Natural killer cell (primary cell): ENCODE measurements at regions of chr14 and their contacts with region 1.

Region 1: DNA sequence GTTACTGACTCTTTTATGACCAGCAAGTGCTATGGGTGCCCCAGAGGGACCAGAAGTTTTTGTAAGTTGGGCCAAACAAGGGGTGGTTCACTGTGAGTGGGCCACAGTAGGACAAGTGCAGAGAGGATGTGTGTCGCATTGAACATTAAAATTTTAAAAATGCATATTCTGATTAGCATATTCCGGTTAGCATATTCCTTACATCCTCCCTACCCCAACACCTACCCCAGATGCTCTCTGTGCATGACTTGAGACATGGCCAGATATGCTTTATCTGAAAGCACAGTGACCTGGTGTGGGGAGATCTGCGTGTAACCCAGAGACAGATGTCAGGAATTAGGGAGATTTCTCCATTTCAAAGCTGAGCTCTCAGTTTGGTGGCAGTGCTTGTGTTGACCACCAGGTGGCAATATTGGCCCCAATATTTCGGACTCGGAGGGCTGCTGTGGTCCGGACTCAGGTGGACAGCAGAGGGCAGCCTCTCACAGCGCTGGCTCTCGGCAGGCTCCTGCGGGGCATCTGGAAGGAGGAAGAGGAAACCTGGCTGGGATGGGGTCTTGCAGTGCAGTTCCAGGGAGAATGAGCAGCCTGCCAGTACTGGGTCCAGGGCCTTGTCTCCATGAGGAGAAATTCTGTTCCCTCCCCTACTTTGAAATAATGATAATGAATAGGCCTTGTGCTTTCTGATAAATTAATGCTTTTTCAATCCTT is 1.6 kb upstream of the CEBPE start:
- DNase-seq: peak; percentile 72 to 91
- ATAC-seq: peak; percentile 95 to 100 (median 98)
- H3K4me3 ChIP-seq: no peak overlapping the region
- H3K4me3 Mint-ChIP-seq: peak overlapping the region; percentile 36
- H3K27ac ChIP-seq: peak overlapping the region; percentile 52
- H3K27ac Mint-ChIP-seq: peak overlapping the region; percentile 18 to 68
- H3K4me1 ChIP-seq: peaks cover 32% of the 10 kb centered on the region
- H3K4me1 Mint-ChIP-seq: peaks cover 10 to 11% of the 10 kb centered on the region in 2 donors
- H3K27me3 ChIP-seq: no peaks in the 10 kb centered on the region
- H3K27me3 Mint-ChIP-seq: peaks cover 0 to 8% of the 10 kb centered on the region in 2 donors
- CTCF ChIP-seq: peak; percentile 99

Region 2: DNA sequence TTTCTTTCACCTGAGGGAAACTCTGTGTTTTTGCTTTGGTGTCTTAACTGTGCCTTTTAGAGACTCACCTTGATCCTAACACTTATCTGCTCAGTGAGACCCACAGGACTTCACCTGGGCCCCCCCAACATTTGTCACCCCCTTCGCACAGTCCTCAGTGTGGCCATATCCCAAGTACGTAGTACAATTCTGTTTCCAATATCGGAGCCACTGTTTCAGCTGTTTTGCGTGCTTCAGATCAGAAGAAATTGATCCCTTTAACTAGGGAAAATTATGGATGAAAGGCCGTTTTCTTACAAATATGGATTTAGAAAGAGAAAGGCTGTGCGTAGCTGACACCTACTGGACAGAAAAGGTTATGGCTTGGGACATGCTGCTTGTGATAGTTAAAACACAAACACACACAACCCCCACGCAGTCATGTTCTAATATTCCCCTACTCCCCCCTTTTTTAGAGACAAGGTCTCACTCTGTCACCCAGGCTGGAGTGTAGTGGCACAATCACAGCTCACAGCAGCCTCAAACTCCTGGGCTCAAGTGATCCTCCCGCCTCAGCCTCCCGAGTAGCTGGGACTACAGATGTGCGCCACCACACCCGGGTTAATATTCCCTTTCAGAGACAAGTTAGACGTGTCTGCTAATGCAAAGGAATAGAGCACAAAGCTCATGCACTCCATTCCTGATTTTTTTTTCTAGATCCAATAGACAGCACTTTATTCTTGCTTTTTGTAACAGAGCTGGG is 66.4 kb after region 1 on chr14:
- intact Hi-C with region 1: loop called (anchors 1 kb)
- DNase-seq: peak in 1 of 2 donors; percentile 66
- ATAC-seq: peak in 1 of 3 donors; percentile 41
- H3K4me3 ChIP-seq: no peak overlapping the region
- H3K4me3 Mint-ChIP-seq: no peak overlapping the region
- H3K27ac ChIP-seq: no peak overlapping the region
- H3K27ac Mint-ChIP-seq: no peak overlapping the region
- H3K4me1 ChIP-seq: peaks cover 10% of the 10 kb centered on the region
- H3K4me1 Mint-ChIP-seq: no peaks in the 10 kb centered on the region
- H3K27me3 ChIP-seq: peaks cover under 1% of the 10 kb centered on the region
- H3K27me3 Mint-ChIP-seq: peaks cover 0 to 5% of the 10 kb centered on the region in 2 donors
- CTCF ChIP-seq: peak; percentile 39

Region 3: DNA sequence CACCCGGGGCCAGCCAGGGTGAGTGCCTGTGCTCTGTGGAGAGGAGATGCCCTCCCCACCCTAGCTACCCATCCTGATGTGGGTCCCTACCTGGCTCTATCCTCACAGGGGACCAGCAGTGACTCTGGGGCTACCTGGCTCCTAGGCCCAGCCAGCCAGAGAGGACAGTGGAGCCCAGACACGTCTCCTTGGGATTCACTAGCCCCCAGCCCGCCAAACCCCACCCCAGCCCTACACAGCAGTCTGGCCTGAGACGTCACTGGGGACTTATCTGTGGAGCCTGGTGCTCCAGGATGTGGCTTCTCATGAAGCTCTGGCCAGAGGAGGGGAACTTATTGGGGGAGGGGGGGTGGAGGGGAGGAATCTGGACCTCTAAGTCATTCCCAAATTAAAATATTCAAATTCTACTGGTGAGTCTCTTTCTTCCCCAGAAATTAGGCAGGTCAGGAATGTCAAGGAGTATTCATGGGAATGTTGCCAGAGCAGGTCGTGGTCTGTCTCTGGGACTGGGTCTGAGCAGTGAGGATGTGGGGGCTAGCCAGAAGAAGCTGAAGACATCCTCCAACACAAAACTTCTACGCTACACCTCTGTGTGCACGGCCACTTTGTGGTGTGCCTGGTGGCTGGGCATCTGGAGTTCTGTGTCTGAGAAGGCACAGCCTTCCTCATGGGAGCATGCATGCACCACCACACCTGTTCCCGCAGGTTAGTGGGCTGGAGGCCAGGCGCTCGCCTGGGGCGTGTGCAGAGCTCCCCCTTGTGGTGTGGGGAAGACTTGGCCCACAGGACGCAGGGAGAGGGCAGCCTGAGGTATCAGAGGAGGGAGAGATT is 258.9 kb after region 1 on chr14:
- intact Hi-C with region 1: loop called (anchors 2 kb)
- DNase-seq: peak in 1 of 2 donors; percentile 84
- ATAC-seq: peak; percentile 66 to 87 (median 69)
- H3K4me3 ChIP-seq: no peak overlapping the region
- H3K4me3 Mint-ChIP-seq: no peak overlapping the region
- H3K27ac ChIP-seq: no peak overlapping the region
- H3K27ac Mint-ChIP-seq: no peak overlapping the region
- H3K4me1 ChIP-seq: no peaks in the 10 kb centered on the region
- H3K4me1 Mint-ChIP-seq: no peaks in the 10 kb centered on the region
- H3K27me3 ChIP-seq: no peaks in the 10 kb centered on the region
- H3K27me3 Mint-ChIP-seq: peaks cover 0 to 4% of the 10 kb centered on the region in 2 donors
- CTCF ChIP-seq: peak; percentile 66